ENCODE measurements at regions of chr1 and their contacts with region 1.

Region 1: DNA sequence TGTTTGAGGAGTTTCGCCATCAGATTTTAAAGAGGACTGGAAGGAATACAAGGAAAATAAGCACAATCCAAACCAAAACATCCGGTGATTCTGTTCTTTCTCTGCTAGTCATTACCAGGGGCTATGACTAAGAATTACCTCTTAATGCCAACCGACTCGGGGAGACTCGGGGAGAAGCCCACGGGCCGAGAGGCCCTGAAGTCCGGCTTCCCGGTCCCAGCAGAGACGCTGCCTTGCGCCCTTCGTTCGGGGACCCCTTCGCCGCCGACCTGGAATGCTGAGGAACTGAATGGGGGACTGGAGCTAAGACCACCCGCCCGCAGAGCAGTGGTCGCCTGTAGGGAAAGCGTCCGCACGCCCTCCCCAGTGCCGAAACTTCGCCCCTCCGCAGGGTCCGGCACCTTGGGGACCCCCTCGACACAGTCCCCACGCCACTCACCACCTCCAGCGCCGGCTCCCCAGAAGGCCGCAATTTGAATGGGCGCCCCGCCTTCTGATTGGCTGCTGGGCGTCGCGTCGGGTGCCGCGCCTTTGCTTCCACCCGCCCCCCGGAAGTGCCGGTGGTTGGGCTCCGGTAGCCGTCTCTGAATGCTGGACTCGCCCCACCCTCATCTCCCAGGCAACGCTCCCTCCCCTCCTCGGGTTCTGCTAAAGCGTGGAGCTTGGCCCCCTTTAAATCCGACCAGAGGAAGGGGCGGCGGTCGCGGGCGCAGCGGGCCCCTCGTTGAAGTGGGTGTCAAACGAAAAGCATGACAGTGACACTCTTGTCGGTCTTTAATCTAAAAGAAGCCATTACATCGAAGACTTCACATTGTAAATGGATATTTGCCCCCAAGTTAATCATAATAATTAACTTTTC is at the start of gene KIF14:
- DNase-seq: peak; percentile 67
- ATAC-seq: peak; percentile 92
- H3K4me3 ChIP-seq: peak within 1 kb of the TSS; percentile 88
- H3K27ac ChIP-seq: peak within 1 kb of the TSS; percentile 74
- H3K4me1 ChIP-seq: peaks cover 20% of the 10 kb centered on the region
- H3K27me3 ChIP-seq: no peaks in the 10 kb centered on the region
- CTCF ChIP-seq: no peak
- EP300 ChIP-seq: no peak
- POLR2A ChIP-seq: peak; percentile 82
- RAD21 ChIP-seq: no peak
- polyA plus RNA-seq, gene KIF14: 6.8 to 6.9 TPM

Region 2: GRCh38 chr1:200226268-200226968 is 394.1 kb before region 1 on chr1:
- CTCF ChIA-PET with region 1: no interaction called
- POLR2A ChIA-PET with region 1: no interaction called
- RAD21 ChIA-PET with region 1: no interaction called
- SMC1A ChIA-PET with region 1: no interaction called
- in situ Hi-C with region 1: no loop called
- intact Hi-C with region 1: no loop called
- DNase-seq: no peak
- ATAC-seq: peak; percentile 55
- H3K4me3 ChIP-seq: no peak overlapping the region
- H3K27ac ChIP-seq: no peak overlapping the region
- H3K4me1 ChIP-seq: peaks cover 6% of the 10 kb centered on the region; the same call in 1 of the 2 replicates
- H3K27me3 ChIP-seq: peaks cover 0 to 3% of the 10 kb centered on the region in 2 experiments; a peak in 1 of 4 replicates
- CTCF ChIP-seq: no peak
- EP300 ChIP-seq: no peak
- POLR2A ChIP-seq: no peak
- RAD21 ChIP-seq: no peak

Region 3: GRCh38 chr1:200392625-200393185 is 227.8 kb before region 1 on chr1:
- CTCF ChIA-PET with region 1: no interaction called
- POLR2A ChIA-PET with region 1: no interaction called
- RAD21 ChIA-PET with region 1: no interaction called
- SMC1A ChIA-PET with region 1: no interaction called
- in situ Hi-C with region 1: no loop called
- intact Hi-C with region 1: no loop called
- DNase-seq: no peak
- ATAC-seq: no peak
- H3K4me3 ChIP-seq: no peak overlapping the region
- H3K27ac ChIP-seq: no peak overlapping the region
- H3K4me1 ChIP-seq: no peaks in the 10 kb centered on the region
- H3K27me3 ChIP-seq: no peaks in the 10 kb centered on the region
- CTCF ChIP-seq: no peak
- EP300 ChIP-seq: no peak
- POLR2A ChIP-seq: no peak
- RAD21 ChIP-seq: no peak

Region 4: GRCh38 chr1:200558866-200559459 is 61.5 kb before region 1 on chr1:
- CTCF ChIA-PET with region 1: interaction called, 43 read pairs
- POLR2A ChIA-PET with region 1: interaction called, 5 read pairs
- RAD21 ChIA-PET with region 1: interaction called, 70 read pairs
- SMC1A ChIA-PET with region 1: interaction called, 37 read pairs
- in situ Hi-C with region 1: no loop called
- intact Hi-C with region 1: no loop called
- DNase-seq: no peak
- ATAC-seq: peak; percentile 64
- H3K4me3 ChIP-seq: no peak overlapping the region
- H3K27ac ChIP-seq: no peak overlapping the region
- H3K4me1 ChIP-seq: peaks cover 17% of the 10 kb centered on the region
- H3K27me3 ChIP-seq: no peaks in the 10 kb centered on the region
- CTCF ChIP-seq: peak; percentile 56 to 77 (median 60)
- EP300 ChIP-seq: no peak
- POLR2A ChIP-seq: no peak
- RAD21 ChIP-seq: peak; percentile 82

Region 5: GRCh38 chr1:200738740-200739498 is 118.4 kb after region 1 on chr1 and contains the start of gene CAMSAP2:
- CTCF ChIA-PET with region 1: interaction called, 12 read pairs
- POLR2A ChIA-PET with region 1: no interaction called
- RAD21 ChIA-PET with region 1: interaction called, 21 read pairs
- SMC1A ChIA-PET with region 1: interaction called, 12 read pairs
- in situ Hi-C with region 1: no loop called
- intact Hi-C with region 1: loop called (anchors 1 kb)
- DNase-seq: no peak
- ATAC-seq: peak; percentile 75
- H3K4me3 ChIP-seq: peak within 1 kb of the TSS; percentile 99
- H3K27ac ChIP-seq: peak within 1 kb of the TSS; percentile 88
- H3K4me1 ChIP-seq: peaks cover 5% of the 10 kb centered on the region; the same call in 1 of the 2 replicates
- H3K27me3 ChIP-seq: no peaks in the 10 kb centered on the region
- CTCF ChIP-seq: no peak
- EP300 ChIP-seq: no peak
- POLR2A ChIP-seq: peak; percentile 71
- RAD21 ChIP-seq: no peak
- polyA plus RNA-seq, gene CAMSAP2: 5.0 to 6.4 TPM

Region 6: DNA sequence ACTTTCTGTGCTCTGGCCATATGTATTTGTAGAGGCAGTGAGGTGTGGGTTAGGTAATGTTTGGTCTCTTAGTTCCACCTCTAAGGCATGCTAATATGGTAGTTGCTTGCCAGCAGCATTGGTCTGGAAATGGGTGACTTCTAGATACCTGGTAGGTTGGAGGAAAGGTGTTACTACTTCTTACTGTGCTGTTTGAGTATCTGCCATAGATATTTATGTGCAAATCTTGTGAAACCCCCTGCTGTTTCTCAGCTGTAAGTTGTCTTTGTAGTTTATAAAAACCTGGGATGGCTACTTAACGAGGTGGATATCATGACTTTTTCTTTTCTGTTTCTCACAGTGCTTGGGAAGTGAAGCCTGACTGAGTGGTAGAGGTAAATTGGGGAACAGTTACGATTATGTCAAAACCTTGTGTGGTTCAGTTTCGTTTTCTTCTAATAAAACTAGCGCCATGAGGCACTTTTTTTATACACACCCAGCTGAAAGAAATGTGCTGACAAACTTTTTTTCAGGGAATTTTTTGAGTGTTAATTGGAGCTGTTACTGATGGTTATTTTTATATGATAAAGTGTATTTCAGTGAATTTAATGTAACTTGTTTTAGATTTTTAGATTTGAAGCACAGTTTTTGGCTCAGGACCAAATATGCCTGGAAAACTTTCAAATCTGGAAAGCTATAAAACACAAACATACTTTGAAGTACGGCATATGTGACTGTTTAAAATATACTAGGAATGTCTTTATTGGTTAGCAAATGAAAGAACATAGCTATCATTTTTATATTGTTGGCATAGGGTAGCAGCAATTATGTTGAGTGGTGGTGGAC is 160.3 kb after region 1 on chr1:
- CTCF ChIA-PET with region 1: interaction called, 45 read pairs
- POLR2A ChIA-PET with region 1: interaction called, 3 read pairs
- RAD21 ChIA-PET with region 1: interaction called, 28 read pairs
- SMC1A ChIA-PET with region 1: interaction called, 17 read pairs
- in situ Hi-C with region 1: no loop called
- intact Hi-C with region 1: no loop called
- DNase-seq: peak; percentile 61
- ATAC-seq: peak; percentile 89
- H3K4me3 ChIP-seq: peak overlapping the region; percentile 4; the same call in 1 of the 2 replicates
- H3K27ac ChIP-seq: peak overlapping the region; percentile 71
- H3K4me1 ChIP-seq: peaks cover 10% of the 10 kb centered on the region
- H3K27me3 ChIP-seq: no peaks in the 10 kb centered on the region
- CTCF ChIP-seq: no peak
- EP300 ChIP-seq: no peak
- POLR2A ChIP-seq: no peak
- RAD21 ChIP-seq: no peak

Region 7: DNA sequence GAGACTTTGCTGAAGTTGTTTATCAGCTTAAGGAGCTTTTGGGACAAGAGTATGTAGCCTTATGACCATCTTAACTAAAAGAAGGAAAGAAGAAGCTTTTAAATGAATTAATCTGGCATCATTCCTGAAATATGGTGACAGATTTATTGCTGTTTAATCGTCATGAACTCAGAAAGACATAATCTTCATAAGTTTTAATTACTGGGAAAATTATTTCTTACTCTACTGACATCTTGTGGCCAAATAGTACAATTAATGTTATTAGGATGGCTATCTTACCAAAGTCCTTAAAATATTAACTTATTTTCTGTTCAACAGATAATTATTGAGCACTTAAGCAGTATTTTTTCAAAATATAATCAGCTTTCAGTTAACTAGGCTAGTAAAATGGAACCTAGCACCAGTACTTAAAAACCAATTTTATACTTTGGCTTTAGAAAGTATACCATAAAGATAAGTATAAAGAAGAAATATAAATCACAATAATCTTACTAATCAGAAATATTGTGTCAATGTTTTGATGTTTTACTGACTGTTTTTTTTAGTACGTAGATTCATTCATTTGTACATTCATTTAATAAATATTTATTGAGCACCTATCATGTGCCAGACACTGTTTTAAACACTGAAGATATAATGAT is 217.5 kb after region 1 on chr1:
- CTCF ChIA-PET with region 1: interaction called, 75 read pairs
- POLR2A ChIA-PET with region 1: no interaction called
- RAD21 ChIA-PET with region 1: interaction called, 41 read pairs
- SMC1A ChIA-PET with region 1: interaction called, 36 read pairs
- in situ Hi-C with region 1: no loop called
- intact Hi-C with region 1: loop called (anchors 1 kb)
- DNase-seq: no peak
- ATAC-seq: 0 out of 3 replicates have a peak, but pooled peaks have one; percentile 42
- H3K4me3 ChIP-seq: no peak overlapping the region
- H3K27ac ChIP-seq: no peak overlapping the region
- H3K4me1 ChIP-seq: no peaks in the 10 kb centered on the region
- H3K27me3 ChIP-seq: no peaks in the 10 kb centered on the region
- CTCF ChIP-seq: peak in 1 of 3 experiments; percentile 2; a peak in 2 of 6 replicates
- EP300 ChIP-seq: no peak
- POLR2A ChIP-seq: no peak
- RAD21 ChIP-seq: peak; percentile 28; the same call in 1 of the 2 replicates

Region 8: GRCh38 chr1:200907611-200908097 is 287.2 kb after region 1 on chr1:
- CTCF ChIA-PET with region 1: interaction called, 4 read pairs
- POLR2A ChIA-PET with region 1: interaction called, 10 read pairs
- RAD21 ChIA-PET with region 1: interaction called, 7 read pairs
- SMC1A ChIA-PET with region 1: interaction called, 10 read pairs
- in situ Hi-C with region 1: no loop called
- intact Hi-C with region 1: loop called (anchors 5 kb)
- DNase-seq: peak; percentile 67
- ATAC-seq: peak; percentile 74
- H3K4me3 ChIP-seq: no peak overlapping the region
- H3K27ac ChIP-seq: no peak overlapping the region
- H3K4me1 ChIP-seq: peaks cover 15% of the 10 kb centered on the region
- H3K27me3 ChIP-seq: no peaks in the 10 kb centered on the region
- CTCF ChIP-seq: peak in 1 of 3 experiments; percentile 26; a peak in 1 of 6 replicates
- EP300 ChIP-seq: peak; percentile 44 to 60; a peak in 2 of 4 replicates
- POLR2A ChIP-seq: no peak
- RAD21 ChIP-seq: peak; percentile 46

Measured in GM12878 (cell line).